Activated naive CD4-positive, alpha-beta T cell treated with anti-CD3 and anti-CD28 coated beads for 36 hours (primary cell): ENCODE measurements at regions of chr19 and their contacts with region 1.

Region 1: DNA sequence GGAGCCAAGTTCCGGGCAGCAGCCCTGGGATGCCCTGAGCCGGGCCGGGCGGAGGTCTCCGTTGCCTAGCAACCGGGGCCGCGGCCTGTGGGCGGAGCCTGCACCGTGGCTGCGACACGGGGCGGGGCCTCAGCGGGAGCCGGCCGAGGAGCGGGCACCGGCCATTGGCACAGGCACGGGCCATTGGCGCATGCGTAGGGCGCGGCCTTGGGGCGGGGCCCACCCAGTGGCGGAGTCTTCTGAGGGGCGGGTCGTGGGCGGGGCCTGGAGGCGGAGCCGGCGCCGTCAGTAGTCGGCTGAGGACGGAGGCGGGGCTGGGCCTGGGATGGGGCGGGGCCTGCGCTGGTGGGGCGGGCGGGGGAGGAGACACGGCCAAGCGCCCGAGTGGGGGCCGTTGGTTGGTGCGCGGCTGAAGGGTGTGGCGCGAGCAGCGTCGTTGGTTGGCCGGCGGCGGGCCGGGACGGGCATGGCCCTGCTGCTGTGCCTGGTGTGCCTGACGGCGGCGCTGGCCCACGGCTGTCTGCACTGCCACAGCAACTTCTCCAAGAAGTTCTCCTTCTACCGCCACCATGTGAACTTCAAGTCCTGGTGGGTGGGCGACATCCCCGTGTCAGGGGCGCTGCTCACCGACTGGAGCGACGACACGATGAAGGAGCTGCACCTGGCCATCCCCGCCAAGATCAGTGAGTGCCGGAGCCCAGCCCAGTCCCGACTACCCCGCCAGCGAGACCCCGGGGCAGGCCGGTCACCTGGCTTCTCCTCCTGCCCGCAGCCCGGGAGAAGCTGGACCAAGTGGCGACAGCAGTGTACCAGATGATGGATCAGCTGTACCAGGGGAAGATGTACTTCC is at the start of gene IZUMO4:
- DNase-seq: peak; percentile 100
- H3K4me3 Mint-ChIP-seq: peak within 1 kb of the TSS; percentile 94
- H3K27ac Mint-ChIP-seq: peak within 1 kb of the TSS; percentile 92
- H3K4me1 Mint-ChIP-seq: peaks cover 36% of the 10 kb centered on the region
- H3K27me3 Mint-ChIP-seq: no peaks in the 10 kb centered on the region
- total RNA-seq, gene IZUMO4: 13.1 to 14.2 TPM

Region 2: GRCh38 chr19:1863726-1864480 is 232.8 kb before region 1 on chr19:
- CTCF ChIA-PET with region 1: no interaction called
- intact Hi-C with region 1: loop called (anchors 5 kb)
- DNase-seq: peak; percentile 93
- H3K4me3 Mint-ChIP-seq: peak overlapping the region; percentile 75
- H3K27ac Mint-ChIP-seq: peak overlapping the region; percentile 72
- H3K4me1 Mint-ChIP-seq: peaks cover 34% of the 10 kb centered on the region
- H3K27me3 Mint-ChIP-seq: no peaks in the 10 kb centered on the region

Region 3: GRCh38 chr19:1942078-1942933 is 154.4 kb before region 1 on chr19:
- CTCF ChIA-PET with region 1: interaction called, 3 read pairs
- intact Hi-C with region 1: loop called (anchors 1 kb)
- DNase-seq: peak; percentile 89
- H3K4me3 Mint-ChIP-seq: peak overlapping the region; percentile 91
- H3K27ac Mint-ChIP-seq: peak overlapping the region; percentile 92
- H3K4me1 Mint-ChIP-seq: peaks cover 31% of the 10 kb centered on the region
- H3K27me3 Mint-ChIP-seq: no peaks in the 10 kb centered on the region

Region 4: DNA sequence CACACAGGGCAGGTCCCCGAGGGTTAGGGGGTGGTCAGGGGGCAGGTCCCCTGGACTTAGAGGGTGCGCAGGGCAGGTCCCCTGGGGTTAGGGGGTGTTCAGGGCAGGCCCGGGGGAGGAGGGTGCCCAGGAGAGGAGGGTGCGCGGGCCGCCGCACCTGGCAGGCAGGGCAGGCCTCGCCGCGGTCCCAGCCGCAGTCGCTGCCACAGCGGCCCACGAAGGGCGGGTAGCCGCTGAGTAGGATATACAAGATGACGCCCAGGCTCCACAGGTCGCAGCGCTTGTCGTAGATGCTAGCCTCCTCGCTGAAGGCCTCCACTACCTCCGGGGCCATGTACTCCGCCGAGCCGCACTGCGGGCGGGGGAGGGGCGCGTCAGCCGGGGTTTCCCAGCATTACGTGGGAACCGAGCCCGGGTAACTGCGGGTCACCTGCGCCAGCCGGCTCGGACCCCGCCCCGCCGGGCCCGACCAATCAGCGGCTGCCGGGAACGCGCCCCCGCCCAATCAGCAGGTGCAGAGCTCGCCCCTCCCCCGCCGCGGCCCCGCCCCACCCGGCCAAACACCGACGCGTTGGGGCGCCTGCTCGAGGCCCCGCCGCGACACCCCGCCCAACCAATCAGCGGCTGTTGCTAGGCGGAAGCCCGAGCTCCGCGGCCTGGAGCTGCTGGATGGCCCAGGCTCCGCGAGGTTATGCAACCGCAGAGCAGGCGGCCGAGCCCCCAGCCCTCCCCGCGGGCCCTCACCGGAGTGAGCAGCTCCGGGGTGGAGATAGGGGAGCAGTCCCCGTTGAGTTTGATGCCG is 54.8 kb before region 1 on chr19:
- CTCF ChIA-PET with region 1: no interaction called
- intact Hi-C with region 1: loop called (anchors 1 kb)
- DNase-seq: peak; percentile 99
- H3K4me3 Mint-ChIP-seq: peak overlapping the region; percentile 81
- H3K27ac Mint-ChIP-seq: peak overlapping the region; percentile 92
- H3K4me1 Mint-ChIP-seq: peaks cover 31% of the 10 kb centered on the region
- H3K27me3 Mint-ChIP-seq: no peaks in the 10 kb centered on the region

Region 5: GRCh38 chr19:2070436-2070827 is 26.3 kb before region 1 on chr19:
- CTCF ChIA-PET with region 1: no interaction called
- intact Hi-C with region 1: no loop called
- DNase-seq: no peak
- H3K4me3 Mint-ChIP-seq: no peak overlapping the region
- H3K27ac Mint-ChIP-seq: no peak overlapping the region
- H3K4me1 Mint-ChIP-seq: peaks cover 7% of the 10 kb centered on the region
- H3K27me3 Mint-ChIP-seq: no peaks in the 10 kb centered on the region

Region 6: DNA sequence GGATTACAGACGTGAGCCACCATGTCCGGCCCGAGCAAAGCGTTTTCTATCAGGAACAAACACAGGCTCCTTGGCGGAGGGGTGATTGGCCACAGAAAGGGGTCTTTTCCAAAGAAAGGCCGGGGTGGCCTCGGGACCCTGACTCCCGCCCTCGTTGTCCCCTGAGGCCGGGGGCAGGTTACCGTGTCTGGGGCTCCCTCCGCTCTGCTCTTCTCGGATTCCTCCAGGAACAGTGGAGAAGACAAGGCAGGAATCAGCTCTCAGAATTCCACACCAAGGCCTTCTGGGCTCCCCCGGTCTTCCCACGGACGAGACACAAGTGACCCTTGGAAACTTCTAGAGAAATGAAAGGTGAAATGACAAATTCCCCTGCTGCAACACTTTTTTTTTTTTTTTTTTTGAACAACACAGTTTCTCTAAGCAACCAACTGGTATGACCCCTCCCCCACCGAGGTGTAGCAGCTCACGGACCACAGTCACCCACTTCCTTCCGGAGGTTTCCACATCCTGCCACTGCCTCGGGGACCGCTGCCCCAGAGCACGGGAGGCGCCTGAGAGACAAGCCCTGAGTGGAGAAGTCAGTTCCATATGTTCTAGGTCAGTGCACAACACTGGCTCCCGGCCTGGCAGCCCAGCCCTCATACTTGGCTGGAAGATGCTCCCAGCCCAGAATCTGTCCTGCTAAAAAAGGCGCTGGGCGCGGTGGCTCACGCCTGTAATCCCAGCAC is 11.5 kb before region 1 on chr19:
- CTCF ChIA-PET with region 1: interaction called, 8 read pairs
- intact Hi-C with region 1: loop called (anchors 1 kb)
- DNase-seq: peak; percentile 97
- H3K4me3 Mint-ChIP-seq: peak overlapping the region; percentile 93
- H3K27ac Mint-ChIP-seq: peak overlapping the region; percentile 98
- H3K4me1 Mint-ChIP-seq: peaks cover 65% of the 10 kb centered on the region
- H3K27me3 Mint-ChIP-seq: no peaks in the 10 kb centered on the region

Region 7: DNA sequence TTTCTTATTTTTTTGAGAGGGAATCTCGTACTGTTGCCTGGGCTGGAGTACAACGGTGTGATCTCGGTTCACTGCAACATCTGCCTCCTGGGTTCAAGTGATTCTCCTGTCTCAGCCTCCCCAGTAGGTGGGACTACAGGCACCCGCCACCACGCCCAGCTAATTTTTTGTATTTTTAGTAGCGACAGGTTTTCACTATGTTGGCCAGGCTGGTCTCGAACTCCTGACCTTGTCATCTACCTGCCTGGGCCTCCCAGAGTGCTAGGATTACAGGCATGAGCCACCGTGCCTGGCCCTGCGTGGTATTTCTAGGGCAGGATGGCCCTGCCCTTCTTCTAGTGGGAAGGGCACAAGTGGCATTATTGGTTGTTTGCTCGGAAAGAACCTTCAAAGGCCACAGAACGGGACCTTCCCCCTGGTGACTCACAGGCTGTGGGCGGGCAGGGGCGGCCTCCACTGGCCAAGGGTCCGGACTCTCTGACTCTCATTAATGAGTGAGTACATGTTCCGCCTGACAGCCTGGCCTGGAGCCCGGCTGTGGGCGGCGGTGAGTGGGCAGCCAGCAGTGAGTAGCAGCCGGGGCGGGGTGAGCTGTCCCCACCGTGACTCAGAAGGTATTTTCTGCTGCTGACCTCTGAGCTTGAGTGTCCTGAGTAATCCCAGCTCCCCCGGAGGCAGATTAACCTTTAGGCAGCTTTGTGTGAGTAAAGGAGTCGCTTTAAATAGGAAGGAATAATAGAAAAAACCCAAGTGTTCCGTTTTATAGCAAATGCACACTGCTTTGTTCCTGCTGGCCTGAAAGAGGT is 72.1 kb after region 1 on chr19:
- CTCF ChIA-PET with region 1: no interaction called
- intact Hi-C with region 1: loop called (anchors 1 kb)
- DNase-seq: peak; percentile 71
- H3K4me3 Mint-ChIP-seq: peak overlapping the region; percentile 12
- H3K27ac Mint-ChIP-seq: peak overlapping the region; percentile 72
- H3K4me1 Mint-ChIP-seq: peaks cover 57% of the 10 kb centered on the region
- H3K27me3 Mint-ChIP-seq: no peaks in the 10 kb centered on the region

Region 8: DNA sequence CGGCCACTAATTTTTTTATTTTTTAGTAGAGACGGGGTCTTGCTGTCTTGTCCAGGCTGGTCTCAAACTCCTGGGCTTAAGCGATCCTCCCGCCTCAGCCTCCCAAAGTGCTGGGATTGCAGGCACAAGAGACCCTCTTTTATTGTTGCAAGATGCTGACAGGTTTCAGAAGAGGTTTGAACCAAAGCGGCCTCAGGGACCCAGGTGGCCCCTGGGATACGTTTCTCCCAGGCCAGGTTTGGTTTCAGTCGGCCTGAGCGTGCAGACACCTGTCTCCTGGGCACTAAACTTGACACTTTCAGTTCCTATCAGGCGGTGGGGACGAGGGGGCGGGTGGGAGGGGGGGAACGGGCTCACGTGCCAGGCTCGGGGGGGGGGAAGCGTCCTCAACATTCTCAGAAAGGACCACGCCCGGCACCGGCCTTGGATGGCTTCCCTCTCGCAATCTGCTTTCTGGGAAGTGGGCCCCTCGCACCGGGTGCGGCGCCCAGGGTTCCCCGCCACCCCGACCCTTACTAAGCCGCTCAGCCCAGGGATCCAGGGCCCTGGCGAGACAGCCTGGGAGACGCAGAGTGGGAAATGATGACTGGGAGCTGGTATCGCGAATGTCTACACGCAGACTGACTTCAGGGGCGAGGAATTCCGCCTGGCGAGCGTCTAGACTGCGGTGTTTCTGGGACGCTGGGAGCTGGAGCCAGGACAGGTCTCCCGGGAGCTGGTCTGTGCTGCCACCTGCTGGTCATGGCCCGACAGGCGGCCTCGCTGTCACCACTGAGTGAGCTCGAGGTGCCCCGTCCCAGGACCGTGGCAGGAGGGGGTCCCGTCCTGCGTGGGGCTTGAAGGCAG is 514.2 kb after region 1 on chr19:
- CTCF ChIA-PET with region 1: no interaction called
- intact Hi-C with region 1: loop called (anchors 10 kb)
- DNase-seq: peak; percentile 95
- H3K4me3 Mint-ChIP-seq: peak overlapping the region; percentile 81
- H3K27ac Mint-ChIP-seq: peak overlapping the region; percentile 81
- H3K4me1 Mint-ChIP-seq: peaks cover 46% of the 10 kb centered on the region
- H3K27me3 Mint-ChIP-seq: peaks cover 4% of the 10 kb centered on the region